Transverse colon (tissue), 4 donors: ENCODE measurements at regions of chr3 and their contacts with region 1.

Region 1: DNA sequence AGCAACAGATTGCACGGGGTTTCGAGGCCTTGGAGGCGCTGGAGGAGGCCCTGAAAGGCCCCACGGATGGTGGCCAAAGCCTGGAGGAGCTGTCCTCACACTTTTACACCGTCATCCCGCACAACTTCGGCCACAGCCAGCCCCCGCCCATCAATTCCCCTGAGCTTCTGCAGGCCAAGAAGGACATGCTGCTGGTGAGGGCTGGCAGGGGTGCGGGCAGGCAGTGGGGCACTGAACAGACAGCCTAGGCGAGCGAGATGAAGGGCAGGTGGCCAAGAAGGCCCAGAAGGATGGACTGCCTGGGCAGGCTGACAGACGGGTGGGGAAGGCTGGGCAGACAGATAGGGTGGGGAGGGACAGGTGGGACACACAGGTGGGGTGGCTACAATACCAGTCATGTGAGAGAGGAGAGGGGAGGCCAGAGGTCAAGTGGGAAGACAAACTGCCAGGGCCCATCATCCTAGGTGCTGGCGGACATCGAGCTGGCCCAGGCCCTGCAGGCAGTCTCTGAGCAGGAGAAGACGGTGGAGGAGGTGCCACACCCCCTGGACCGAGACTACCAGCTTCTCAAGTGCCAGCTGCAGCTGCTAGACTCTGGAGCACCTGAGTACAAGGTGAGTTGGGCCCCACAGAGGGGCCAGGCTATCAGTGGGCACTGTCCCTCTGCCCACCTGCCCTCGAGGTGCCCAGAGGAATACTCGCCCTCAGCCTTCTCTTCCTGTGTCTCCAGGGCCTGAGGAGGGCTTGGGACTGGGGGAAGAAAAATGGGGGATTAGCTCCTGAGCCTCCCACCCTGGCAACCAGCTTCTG is 3.1 kb downstream of the PARP3 start:
- DNase-seq: no peak
- H3K4me3 ChIP-seq: no peak overlapping the region
- H3K27ac ChIP-seq: no peak overlapping the region
- H3K4me1 ChIP-seq: peaks cover 13 to 25% (median 24%) of the 10 kb centered on the region in 4 donors
- H3K27me3 ChIP-seq: no peaks in the 10 kb centered on the region
- CTCF ChIP-seq: no peak
- EP300 ChIP-seq: no peak
- POLR2A ChIP-seq: no peak

Region 2: DNA sequence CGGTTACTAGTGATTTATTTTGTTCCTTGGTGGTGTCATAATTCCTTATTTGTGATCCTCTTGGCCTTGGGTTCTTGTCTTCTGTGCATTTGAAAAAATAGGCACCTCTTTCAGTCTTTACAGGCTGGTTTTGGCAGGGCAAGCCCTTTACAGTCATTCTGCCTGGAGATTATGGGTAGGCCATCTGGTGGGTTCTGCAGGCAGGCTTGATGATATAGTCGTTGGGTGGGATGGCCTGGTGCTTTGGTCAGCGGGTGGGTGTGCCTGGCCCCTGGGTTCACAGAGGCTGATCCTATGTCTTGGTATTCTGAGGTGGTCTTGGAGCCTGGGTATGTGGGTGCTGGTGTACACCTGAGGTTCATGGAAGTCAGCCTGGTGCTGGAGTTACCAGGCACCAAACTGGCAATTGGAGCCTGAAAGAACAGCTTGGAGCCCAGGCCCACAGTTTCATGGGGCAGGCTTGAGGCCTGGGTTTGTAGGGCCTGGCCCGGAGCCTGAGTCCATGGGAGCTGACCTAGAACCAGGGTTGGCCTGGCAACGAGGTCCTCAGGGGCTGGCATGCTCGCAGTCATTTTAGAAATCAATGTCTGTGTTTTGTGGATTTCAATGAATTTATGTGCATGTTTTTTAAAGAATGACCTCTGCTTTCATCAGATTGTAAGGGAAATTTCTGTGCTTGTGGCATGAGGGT is 1207.2 kb before region 1 on chr3:
- in situ Hi-C with region 1: no loop called
- intact Hi-C with region 1: no loop called
- DNase-seq: no peak
- H3K4me3 ChIP-seq: no peak overlapping the region
- H3K27ac ChIP-seq: no peak overlapping the region
- H3K4me1 ChIP-seq: no peaks in the 10 kb centered on the region
- H3K27me3 ChIP-seq: no peaks in the 10 kb centered on the region
- CTCF ChIP-seq: no peak
- EP300 ChIP-seq: no peak
- POLR2A ChIP-seq: no peak

Region 3: DNA sequence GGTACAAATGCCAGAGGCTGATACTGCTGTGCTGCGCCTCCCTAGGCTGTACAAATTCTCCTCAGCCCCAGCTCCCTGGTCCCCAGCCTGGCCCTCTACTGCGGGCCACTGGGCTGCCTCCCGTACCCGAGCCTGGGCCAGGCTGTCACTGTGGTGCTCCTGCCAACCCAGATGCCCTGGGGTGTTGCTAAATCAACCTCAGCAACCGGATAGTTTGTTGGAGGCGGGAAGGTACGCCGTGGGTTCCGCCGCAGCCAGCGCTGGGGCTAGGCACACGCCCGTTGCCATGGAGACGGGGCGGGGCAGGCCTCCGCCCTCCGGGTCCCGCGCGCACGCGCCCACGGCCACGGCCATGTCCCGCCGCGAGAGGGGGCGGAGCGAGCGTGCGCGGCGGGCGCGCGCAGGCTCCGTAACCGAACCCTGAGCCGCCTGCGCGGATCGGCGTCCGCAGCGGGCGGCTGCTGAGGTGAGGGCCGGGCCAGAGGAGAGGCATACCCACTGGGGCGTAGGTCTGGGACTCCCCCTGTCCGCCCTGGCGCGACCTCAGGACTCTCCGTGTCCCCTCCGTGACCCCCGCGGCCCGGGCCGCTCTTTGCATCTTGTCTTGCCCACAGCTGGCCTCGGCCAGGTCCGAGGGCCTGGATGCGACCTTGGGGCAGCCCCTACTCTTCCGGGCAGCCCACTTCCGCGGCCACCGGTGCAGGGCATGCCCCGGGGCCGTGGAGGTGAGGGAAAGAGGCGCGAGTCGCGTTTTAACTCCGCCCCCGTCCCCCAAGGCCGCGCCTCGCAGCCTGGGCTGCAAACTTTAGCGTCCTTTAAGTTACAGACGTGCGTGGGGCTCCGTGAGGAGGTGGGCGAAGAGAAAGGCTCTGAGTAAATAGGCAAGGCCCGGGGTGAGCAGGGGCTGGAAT is 274.2 kb before region 1 on chr3 and contains the start of gene TEX264:
- in situ Hi-C with region 1: no loop called
- intact Hi-C with region 1: no loop called
- DNase-seq: peak; percentile 94
- H3K4me3 ChIP-seq: peak within 1 kb of the TSS; percentile 76 to 98 (median 82)
- H3K27ac ChIP-seq: peak within 1 kb of the TSS; percentile 96 to 98 (median 97)
- H3K4me1 ChIP-seq: peaks cover 10 to 39% (median 34%) of the 10 kb centered on the region in 4 donors
- H3K27me3 ChIP-seq: no peaks in the 10 kb centered on the region
- CTCF ChIP-seq: no peak
- EP300 ChIP-seq: no peak
- POLR2A ChIP-seq: peak; percentile 79
- total RNA-seq, gene TEX264: 60.9 to 116 (median 88.2) TPM

Region 4: GRCh38 chr3:51830836-51831385 is 114.3 kb before region 1 on chr3:
- in situ Hi-C with region 1: no loop called
- intact Hi-C with region 1: no loop called
- DNase-seq: no peak
- H3K4me3 ChIP-seq: no peak overlapping the region
- H3K27ac ChIP-seq: no peak overlapping the region
- H3K4me1 ChIP-seq: no peaks in the 10 kb centered on the region
- H3K27me3 ChIP-seq: peaks cover 18% of the 10 kb centered on the region
- CTCF ChIP-seq: no peak
- EP300 ChIP-seq: no peak
- POLR2A ChIP-seq: no peak

Region 5: GRCh38 chr3:52372822-52373504 is 427.7 kb after region 1 on chr3:
- in situ Hi-C with region 1: no loop called
- intact Hi-C with region 1: no loop called
- DNase-seq: peak; percentile 51
- H3K4me3 ChIP-seq: peak overlapping the region in 1 of 4 donors; percentile 14
- H3K27ac ChIP-seq: no peak overlapping the region
- H3K4me1 ChIP-seq: no peaks in the 10 kb centered on the region
- H3K27me3 ChIP-seq: no peaks in the 10 kb centered on the region
- CTCF ChIP-seq: no peak
- EP300 ChIP-seq: no peak
- POLR2A ChIP-seq: no peak

Region 6: DNA sequence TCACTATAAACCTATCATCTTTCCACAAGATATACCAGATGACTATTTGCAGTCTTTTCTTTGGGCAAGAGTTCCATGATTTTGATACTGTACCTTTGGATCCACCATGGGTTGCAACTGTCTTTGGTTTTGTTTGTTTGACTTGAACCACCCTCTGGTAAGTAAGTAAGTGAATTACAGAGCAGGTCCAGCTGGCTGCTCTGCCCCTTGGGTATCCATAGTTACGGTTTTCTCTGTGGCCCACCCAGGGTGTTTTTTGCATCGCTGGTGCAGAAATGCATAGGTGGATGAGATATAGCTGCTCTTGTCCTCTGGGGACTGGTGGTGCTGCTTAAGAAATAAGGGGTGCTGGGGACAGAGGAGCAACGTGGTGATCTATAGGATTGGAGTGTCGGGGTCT is 1867.2 kb after region 1 on chr3:
- in situ Hi-C with region 1: no loop called
- intact Hi-C with region 1: loop called (anchors 5 kb)
- DNase-seq: no peak
- H3K4me3 ChIP-seq: no peak overlapping the region
- H3K27ac ChIP-seq: no peak overlapping the region
- H3K4me1 ChIP-seq: peaks cover 0 to 2% (median under 1%) of the 10 kb centered on the region in 4 donors
- H3K27me3 ChIP-seq: no peaks in the 10 kb centered on the region
- CTCF ChIP-seq: no peak
- EP300 ChIP-seq: no peak
- POLR2A ChIP-seq: no peak